ENCODE measurements at regions of chr7 and their contacts with region 1.

Region 1: GRCh38 chr7:137592232-137592896 is 248.8 kb upstream of the PTN start:
- DNase-seq: no peak
- H3K4me3 ChIP-seq: no peak overlapping the region
- CTCF ChIP-seq: peak; percentile 78

Region 2: DNA sequence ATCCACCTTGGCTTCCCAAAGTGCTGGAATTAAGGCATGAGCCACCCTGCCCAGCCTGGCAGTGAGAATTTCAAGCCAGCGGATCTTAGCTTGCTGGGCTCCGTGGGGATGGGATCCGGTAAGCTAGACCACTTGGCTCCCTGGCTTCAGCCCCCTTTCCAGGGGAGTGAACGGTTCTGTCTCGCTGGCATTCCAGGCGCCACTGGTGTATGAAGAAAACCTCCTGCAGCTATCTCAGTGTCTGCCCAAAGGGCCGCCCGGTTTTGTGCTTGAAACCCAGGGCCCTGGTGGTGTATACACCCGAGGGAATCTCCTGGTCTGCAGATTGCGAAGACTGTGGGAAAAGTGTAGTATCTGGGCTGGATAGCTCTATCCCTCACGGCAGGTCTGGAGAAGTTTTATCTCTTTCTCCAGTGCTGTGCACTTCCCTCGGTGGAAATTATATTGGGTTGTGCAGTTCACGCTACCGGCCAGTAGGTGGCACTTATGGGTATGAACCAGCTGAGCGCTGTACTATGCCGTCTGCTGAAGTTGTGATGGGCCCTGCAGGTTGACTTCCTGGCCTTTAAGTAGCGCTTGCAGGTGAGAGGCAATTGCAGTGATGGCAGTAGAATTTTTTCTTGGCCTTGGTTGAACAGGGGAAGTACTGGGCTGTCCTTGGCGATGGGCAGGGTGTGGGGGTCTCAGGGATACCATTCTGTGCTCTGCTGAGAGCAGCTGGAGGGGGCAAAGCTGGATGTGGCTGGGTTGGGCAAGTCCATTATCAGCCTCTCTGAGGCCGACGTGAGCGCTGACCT is 1477.2 kb before region 1 on chr7:
- CTCF ChIA-PET with region 1: interaction called, 11 read pairs
- POLR2A ChIA-PET with region 1: no interaction called
- DNase-seq: no peak
- H3K4me3 ChIP-seq: no peak overlapping the region
- CTCF ChIP-seq: peak; percentile 71

Region 3: DNA sequence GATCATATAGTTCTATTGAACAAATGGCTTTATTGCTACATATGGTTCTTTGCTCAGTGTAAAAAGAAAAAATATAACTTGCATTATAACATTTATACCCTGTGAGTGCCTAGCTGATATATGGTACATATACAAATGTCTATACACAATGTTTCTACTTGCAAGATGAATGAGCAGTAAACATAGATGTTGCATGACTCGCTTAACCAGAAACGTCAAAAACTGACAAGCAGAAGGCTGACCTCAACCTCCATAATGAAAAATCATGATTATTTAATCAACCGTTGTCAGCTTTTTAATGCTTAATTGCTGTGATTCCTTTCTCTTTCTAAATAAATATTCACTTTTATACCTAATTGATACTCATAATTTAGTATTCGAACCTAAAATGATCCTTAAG is 432.1 kb before region 1 on chr7:
- CTCF ChIA-PET with region 1: interaction called, 127 read pairs
- POLR2A ChIA-PET with region 1: no interaction called
- DNase-seq: no peak
- H3K4me3 ChIP-seq: no peak overlapping the region
- CTCF ChIP-seq: no peak

Region 4: DNA sequence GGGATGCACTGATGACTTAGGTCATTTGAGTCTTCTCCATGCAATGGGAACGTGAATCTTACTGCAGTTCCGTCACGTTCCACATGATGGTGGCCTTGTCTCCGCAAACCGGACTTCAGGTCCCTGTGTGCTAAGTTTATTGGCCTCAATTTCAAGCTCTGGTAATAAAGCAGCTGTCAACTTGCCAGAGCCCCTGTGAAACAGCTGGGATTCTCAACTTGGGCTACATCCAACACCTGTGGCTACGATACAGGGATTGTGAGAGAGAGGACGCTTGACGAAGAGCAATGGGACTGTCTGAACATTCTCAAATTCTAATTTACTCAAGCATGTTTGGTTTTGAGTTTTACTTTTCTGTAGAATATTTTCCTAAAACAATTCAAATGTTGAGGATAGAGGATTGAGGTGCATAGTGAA is 423.1 kb before region 1 on chr7:
- CTCF ChIA-PET with region 1: interaction called, 127 read pairs
- POLR2A ChIA-PET with region 1: interaction called, 3 read pairs
- DNase-seq: peak; percentile 46
- H3K4me3 ChIP-seq: no peak overlapping the region
- CTCF ChIP-seq: peak; percentile 75

Region 5: DNA sequence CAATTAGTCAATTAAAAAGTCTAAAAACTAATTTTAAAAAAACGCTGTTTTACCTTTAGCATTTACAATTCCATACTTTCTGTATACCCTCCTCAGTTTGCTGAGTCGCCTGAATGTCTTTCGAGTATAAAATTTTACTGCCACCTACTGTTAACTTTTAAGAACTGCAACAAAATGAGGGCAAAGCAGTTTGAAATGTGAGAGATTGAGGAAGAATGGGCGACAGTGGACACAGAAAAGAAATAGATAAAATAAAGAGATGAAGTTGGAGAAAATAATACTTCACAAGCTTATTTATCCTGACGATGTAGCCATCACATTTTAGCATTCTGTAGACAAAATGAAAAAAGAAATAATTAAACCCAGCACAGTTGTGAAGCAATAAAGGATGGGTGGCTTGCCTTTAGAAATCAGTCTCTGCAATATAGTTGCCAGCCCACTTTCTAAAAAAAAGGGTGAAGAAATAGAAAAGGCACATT is 138.1 kb before region 1 on chr7:
- CTCF ChIA-PET with region 1: interaction called, 31 read pairs
- POLR2A ChIA-PET with region 1: no interaction called
- DNase-seq: no peak
- H3K4me3 ChIP-seq: no peak overlapping the region
- CTCF ChIP-seq: peak; percentile 45

Region 6: DNA sequence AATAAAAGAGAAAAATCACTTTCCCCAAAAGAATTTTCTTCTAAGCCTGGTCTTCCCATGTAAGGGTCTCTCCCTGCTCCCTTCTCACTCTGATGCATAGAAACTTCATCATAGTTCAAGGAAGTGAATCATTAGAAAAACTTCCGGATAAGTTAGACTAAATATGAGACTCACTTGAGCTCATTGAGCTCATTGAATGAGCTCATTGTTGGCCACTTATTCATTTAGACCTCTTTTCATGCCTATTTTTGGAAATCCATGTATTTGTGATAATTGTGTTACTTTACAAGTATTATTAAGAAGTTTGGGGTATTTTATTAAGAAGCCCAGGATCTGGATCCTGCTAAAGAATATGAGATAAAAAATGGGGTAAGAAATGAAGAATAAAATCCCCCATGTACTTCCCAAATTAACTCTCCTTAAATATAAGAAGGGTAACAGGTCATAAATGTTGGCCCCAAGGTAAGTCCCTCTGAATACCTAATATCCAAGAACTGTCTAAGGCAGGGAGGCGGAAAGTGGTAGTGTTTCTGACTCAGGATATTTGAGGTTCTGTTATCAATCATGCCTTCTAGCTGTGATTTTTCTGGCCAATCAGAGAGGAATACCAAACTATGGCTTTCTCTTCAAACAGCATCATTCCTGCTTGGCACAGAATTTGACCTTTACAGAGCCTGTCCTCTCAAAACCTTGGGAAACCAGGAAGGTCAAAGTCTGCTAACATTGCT is 12.3 kb before region 1 on chr7:
- CTCF ChIA-PET with region 1: interaction called, 28 read pairs
- POLR2A ChIA-PET with region 1: interaction called, 7 read pairs
- DNase-seq: peak; percentile 44
- H3K4me3 ChIP-seq: no peak overlapping the region
- CTCF ChIP-seq: no peak

Region 7: GRCh38 chr7:137606061-137606674 is 13.8 kb after region 1 on chr7:
- CTCF ChIA-PET with region 1: interaction called, 13 read pairs
- POLR2A ChIA-PET with region 1: no interaction called
- DNase-seq: no peak
- H3K4me3 ChIP-seq: no peak overlapping the region
- CTCF ChIP-seq: no peak